ENCODE measurements at regions of chr6 and their contacts with region 1.

Region 1: GRCh38 chr6:134640975-134641429 is 308.9 kb downstream of the ALDH8A1 start:
- DNase-seq: no peak
- H3K4me3 ChIP-seq: no peak overlapping the region
- H3K27ac ChIP-seq: peak overlapping the region; percentile 17
- H3K4me1 ChIP-seq: peaks cover 34% of the 10 kb centered on the region
- H3K27me3 ChIP-seq: no peaks in the 10 kb centered on the region
- CTCF ChIP-seq: peak; percentile 67 to 95 (median 74)
- POLR2A ChIP-seq: no peak

Region 2: DNA sequence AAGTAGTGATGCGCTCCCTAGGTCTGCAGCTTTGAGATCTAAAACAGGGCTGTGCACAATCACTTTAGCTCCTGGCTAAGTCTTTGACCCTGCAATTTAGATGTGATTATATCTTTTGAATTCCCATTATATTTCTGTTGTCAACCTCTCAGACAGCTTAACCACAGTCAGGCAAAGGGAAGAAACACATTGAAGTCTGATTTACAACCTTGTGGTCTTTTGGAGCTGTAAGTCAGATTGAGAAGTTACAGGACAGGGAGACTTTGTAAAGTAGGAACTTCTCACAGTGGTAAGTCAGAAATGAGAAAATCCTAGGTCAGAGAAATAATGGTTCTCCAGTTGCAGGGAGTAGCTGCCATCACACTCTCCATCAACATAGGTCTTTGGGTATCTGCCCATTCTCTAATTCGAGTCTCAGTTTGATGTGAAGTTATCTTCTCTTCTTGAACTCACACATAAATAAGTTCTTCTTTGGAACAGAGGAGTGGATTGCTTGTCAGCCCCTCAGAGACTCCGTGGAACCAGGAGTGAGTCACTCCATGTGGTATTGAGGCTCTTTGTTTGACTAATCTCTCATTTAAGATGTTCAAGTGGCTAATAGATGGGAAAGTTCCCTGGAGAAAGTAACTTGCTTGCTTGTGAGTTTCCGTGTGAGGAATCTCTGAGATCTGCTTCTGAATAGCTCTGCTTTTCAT is 288.1 kb before region 1 on chr6:
- intact Hi-C with region 1: no loop called
- DNase-seq: no peak
- H3K4me3 ChIP-seq: no peak overlapping the region
- H3K27ac ChIP-seq: no peak overlapping the region
- H3K4me1 ChIP-seq: peaks cover 12% of the 10 kb centered on the region
- H3K27me3 ChIP-seq: no peaks in the 10 kb centered on the region
- CTCF ChIP-seq: no peak
- POLR2A ChIP-seq: no peak

Region 3: GRCh38 chr6:134882426-134883038 is 241.5 kb after region 1 on chr6:
- intact Hi-C with region 1: loop called (anchors 10 kb)
- DNase-seq: no peak
- H3K4me3 ChIP-seq: no peak overlapping the region
- H3K27ac ChIP-seq: peak overlapping the region; percentile 15
- H3K4me1 ChIP-seq: no peaks in the 10 kb centered on the region
- H3K27me3 ChIP-seq: no peaks in the 10 kb centered on the region
- CTCF ChIP-seq: peak; percentile 48 to 97 (median 55)
- POLR2A ChIP-seq: no peak

Measured in vagina (tissue), 2 donors.